Posterior vena cava (tissue), 2 donors: ENCODE measurements at regions of chr22 and their contacts with region 1.

Region 1: GRCh38 chr22:41280066-41280465 is 5.9 kb downstream of the RANGAP1 start:
- DNase-seq: no peak

Region 2: DNA sequence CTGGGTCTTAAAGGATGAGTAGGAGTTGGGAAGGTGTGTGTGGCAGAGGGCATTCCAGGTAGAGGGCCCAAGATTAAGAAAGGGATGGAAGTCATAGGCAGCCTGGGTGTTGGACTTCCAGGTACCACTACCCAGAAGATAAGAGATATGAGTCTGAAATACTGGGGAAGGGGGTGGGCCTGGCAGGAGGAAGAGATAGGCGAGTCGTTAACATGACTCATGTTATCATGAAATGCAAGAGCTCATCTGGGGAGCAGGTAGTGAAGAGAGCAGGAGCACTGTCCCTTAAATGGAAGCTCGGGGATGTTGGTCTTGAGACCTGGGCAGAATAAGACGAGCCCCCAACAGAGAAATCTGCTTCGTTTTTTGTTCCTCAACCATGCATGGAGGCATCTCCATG is 31.4 kb after region 1 on chr22:
- intact Hi-C with region 1: loop called in 1 of 2 experiments (anchors 1 kb)
- DNase-seq: no peak

Region 3: GRCh38 chr22:42229455-42230149 is 949.5 kb after region 1 on chr22:
- intact Hi-C with region 1: no loop called
- DNase-seq: no peak